Gastrocnemius medialis (tissue), 4 donors: ENCODE measurements at regions of chr15 and their contacts with region 1.

Region 1: GRCh38 chr15:96330450-96331145 is at the start of gene NR2F2:
- DNase-seq: peak; percentile 93 to 97
- ATAC-seq: peak; percentile 73 to 75
- H3K4me3 ChIP-seq: peak within 1 kb of the TSS; percentile 86 to 94 (median 87)
- H3K27ac ChIP-seq: peak within 1 kb of the TSS; percentile 93 to 98 (median 97)
- H3K4me1 ChIP-seq: peaks cover 13 to 16% of the 10 kb centered on the region in 2 donors
- H3K27me3 ChIP-seq: peaks cover 0 to 11% (median 2%) of the 10 kb centered on the region in 3 donors
- CTCF ChIP-seq: peak in 1 of 5 experiments; percentile 5
- POLR2A ChIP-seq: peak; percentile 95 to 96
- total RNA-seq, gene NR2F2: 4.3 to 14.6 (median 9.3) TPM

Region 2: GRCh38 chr15:95857124-95857757 is 473.4 kb before region 1 on chr15:
- in situ Hi-C with region 1: no loop called
- intact Hi-C with region 1: loop called (anchors 10 kb)
- DNase-seq: no peak
- ATAC-seq: no peak
- H3K4me3 ChIP-seq: no peak overlapping the region
- H3K27ac ChIP-seq: peak overlapping the region; percentile 41 to 64 (median 60)
- H3K4me1 ChIP-seq: peaks cover 4 to 8% of the 10 kb centered on the region in 2 donors
- H3K27me3 ChIP-seq: no peaks in the 10 kb centered on the region
- CTCF ChIP-seq: no peak
- POLR2A ChIP-seq: no peak

Region 3: DNA sequence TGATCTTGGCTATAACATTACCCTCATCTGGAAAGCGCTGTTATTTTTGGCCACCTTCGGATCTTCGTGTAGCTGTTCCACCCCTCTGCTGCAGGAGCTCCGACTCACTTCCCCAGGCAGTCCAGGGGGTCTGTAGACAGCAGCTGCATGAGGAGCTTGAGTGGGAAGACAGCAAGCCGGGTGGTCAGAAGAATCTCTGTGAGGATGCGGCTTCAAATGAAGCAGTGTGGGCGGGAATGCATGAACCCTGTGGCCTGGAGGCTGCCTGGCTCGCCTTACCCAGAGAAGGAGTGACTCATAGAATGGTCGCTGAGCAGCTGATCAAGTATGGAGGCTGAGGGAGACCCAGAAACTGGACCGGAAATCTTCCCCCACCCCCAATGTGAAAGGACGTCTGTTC is 45.3 kb before region 1 on chr15:
- in situ Hi-C with region 1: no loop called
- intact Hi-C with region 1: loop called (anchors 2 kb)
- DNase-seq: peak; percentile 13 to 51
- ATAC-seq: peak; percentile 36 to 47
- H3K4me3 ChIP-seq: peak overlapping the region in 3 of 4 donors; percentile 27 to 32 (median 29)
- H3K27ac ChIP-seq: peak overlapping the region; percentile 68 to 83 (median 81)
- H3K4me1 ChIP-seq: peaks cover 19 to 25% of the 10 kb centered on the region in 2 donors
- H3K27me3 ChIP-seq: no peaks in the 10 kb centered on the region
- CTCF ChIP-seq: no peak
- POLR2A ChIP-seq: no peak

Region 4: GRCh38 chr15:96392380-96393208 is 62.0 kb after region 1 on chr15:
- in situ Hi-C with region 1: no loop called
- intact Hi-C with region 1: no loop called
- DNase-seq: no peak
- ATAC-seq: no peak
- H3K4me3 ChIP-seq: no peak overlapping the region
- H3K27ac ChIP-seq: no peak overlapping the region
- H3K4me1 ChIP-seq: no peaks in the 10 kb centered on the region
- H3K27me3 ChIP-seq: no peaks in the 10 kb centered on the region
- CTCF ChIP-seq: no peak
- POLR2A ChIP-seq: no peak

Region 5: GRCh38 chr15:96893159-96893906 is 562.7 kb after region 1 on chr15:
- in situ Hi-C with region 1: no loop called
- intact Hi-C with region 1: loop called (anchors 10 kb)
- DNase-seq: no peak
- ATAC-seq: no peak
- H3K4me3 ChIP-seq: no peak overlapping the region
- H3K27ac ChIP-seq: no peak overlapping the region
- H3K4me1 ChIP-seq: no peaks in the 10 kb centered on the region
- H3K27me3 ChIP-seq: no peaks in the 10 kb centered on the region
- CTCF ChIP-seq: peak in 1 of 5 experiments; percentile 36
- POLR2A ChIP-seq: no peak

Region 6: GRCh38 chr15:97960364-97961066 is 1629.9 kb after region 1 on chr15 and contains the start of gene ARRDC4:
- in situ Hi-C with region 1: loop called in 1 of 4 experiments (anchors 25 kb)
- intact Hi-C with region 1: loop called (anchors 10 kb)
- DNase-seq: peak; percentile 100
- ATAC-seq: peak; percentile 93 to 96
- H3K4me3 ChIP-seq: peak within 1 kb of the TSS; percentile 75 to 98 (median 94)
- H3K27ac ChIP-seq: peak within 1 kb of the TSS; percentile 80 to 97 (median 96)
- H3K4me1 ChIP-seq: peaks cover 23 to 29% of the 10 kb centered on the region in 2 donors
- H3K27me3 ChIP-seq: no peaks in the 10 kb centered on the region
- CTCF ChIP-seq: no peak
- POLR2A ChIP-seq: peak; percentile 85 to 94
- total RNA-seq, gene ARRDC4: 11.7 to 20.6 (median 17.7) TPM